A549 (cell line): ENCODE measurements at regions of chrX and their contacts with region 1.

Region 1: GRCh38 chrX:119871599-119872395 is at the starts of genes NDUFA1 and RNF113A:
- DNase-seq: peak; percentile 82 to 92
- ATAC-seq: peak; percentile 95 to 98
- H3K4me3 ChIP-seq: peak within 1 kb of the TSS; percentile 76
- H3K27ac ChIP-seq: peak within 1 kb of the TSS; percentile 96 to 99
- H3K4me1 ChIP-seq: peaks cover 17% of the 10 kb centered on the region; the same call in 1 of the 3 replicates
- CTCF ChIP-seq: no peak
- EP300 ChIP-seq: no peak
- POLR2A ChIP-seq: peak; percentile 80
- RAD21 ChIP-seq: no peak
- polyA plus RNA-seq, gene NDUFA1: 249 and 435 TPM in 2 replicates
- polyA plus RNA-seq, gene RNF113A: 16.5 and 18.5 TPM in 2 replicates

Region 2: GRCh38 chrX:119852382-119853353 is 19.1 kb before region 1 on chrX and contains the start of gene UPF3B:
- CTCF ChIA-PET with region 1: interaction called, 4 read pairs
- POLR2A ChIA-PET with region 1: interaction called, 26 read pairs
- DNase-seq: peak; percentile 98 to 99
- ATAC-seq: peak; percentile 94 to 96
- H3K4me3 ChIP-seq: peak within 1 kb of the TSS; percentile 68
- H3K27ac ChIP-seq: peak within 1 kb of the TSS; percentile 89 to 94
- H3K4me1 ChIP-seq: no peaks in the 10 kb centered on the region
- CTCF ChIP-seq: no peak
- EP300 ChIP-seq: no peak
- POLR2A ChIP-seq: peak; percentile 79
- RAD21 ChIP-seq: no peak
- polyA plus RNA-seq, gene UPF3B: 14.3 and 27.6 TPM in 2 replicates

Region 3: GRCh38 chrX:120090208-120090607 is 218.4 kb after region 1 on chrX:
- CTCF ChIA-PET with region 1: no interaction called
- POLR2A ChIA-PET with region 1: no interaction called
- DNase-seq: peak in 1 of 2 experiments; percentile 2
- ATAC-seq: peak in 1 of 2 experiments; percentile 34; a peak in 1 of 6 replicates
- H3K4me3 ChIP-seq: no peak overlapping the region
- H3K27ac ChIP-seq: no peak overlapping the region
- H3K4me1 ChIP-seq: no peaks in the 10 kb centered on the region
- CTCF ChIP-seq: no peak
- EP300 ChIP-seq: no peak
- POLR2A ChIP-seq: no peak
- RAD21 ChIP-seq: no peak